HCT116 (cell line): ENCODE measurements at regions of chr18 and their contacts with region 1.

Region 1: GRCh38 chr18:4384932-4385331 is 70.2 kb downstream of the DLGAP1 start:
- DNase-seq: no peak
- ATAC-seq: no peak
- H3K4me3 ChIP-seq: no peak overlapping the region
- H3K27ac ChIP-seq: no peak overlapping the region
- H3K4me1 ChIP-seq: no peaks in the 10 kb centered on the region
- H3K27me3 ChIP-seq: no peaks in the 10 kb centered on the region
- CTCF ChIP-seq: no peak
- POLR2A ChIP-seq: no peak
- RAD21 ChIP-seq: no peak

Region 2: DNA sequence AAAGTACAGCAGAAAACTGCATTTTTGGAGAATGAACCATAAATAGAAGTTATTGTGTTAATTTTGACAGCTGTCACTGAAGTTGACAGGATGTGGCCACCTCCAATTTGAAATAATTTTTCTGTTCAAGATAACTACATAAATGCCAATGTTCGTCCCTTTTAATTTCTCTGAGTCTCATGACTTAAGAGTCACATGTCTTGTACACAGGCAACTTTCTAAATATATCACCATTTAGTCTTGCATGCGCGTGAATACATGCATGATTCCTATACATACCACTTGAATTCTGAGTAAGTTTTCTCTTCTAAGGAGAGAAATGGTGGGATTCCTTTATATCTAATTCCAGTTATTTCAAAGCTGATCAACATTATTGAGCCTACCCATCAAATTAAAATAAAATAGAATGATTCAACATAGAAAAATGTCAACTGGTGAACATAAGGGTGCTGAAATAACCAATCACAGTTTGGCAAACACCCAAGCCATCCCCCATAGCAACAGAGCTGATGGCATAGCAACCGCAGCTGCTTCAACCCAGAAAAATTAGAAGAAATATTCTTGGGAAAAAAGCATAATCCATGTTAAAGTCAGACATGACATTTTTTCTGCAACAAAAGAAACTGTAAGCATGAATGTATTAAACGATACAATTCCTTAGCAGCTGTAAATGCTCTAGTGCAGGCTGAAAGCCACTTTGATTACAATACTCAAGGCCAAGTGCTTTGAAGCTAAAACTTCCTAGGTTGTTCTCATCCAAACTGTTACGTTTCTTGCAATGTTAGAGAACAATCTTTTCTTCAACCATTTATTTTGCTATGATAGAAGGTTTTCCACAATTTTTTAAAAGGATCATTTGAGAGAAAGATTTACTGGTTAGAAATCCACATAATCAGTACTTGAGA is 212.5 kb before region 1 on chr18:
- CTCF ChIA-PET with region 1: no interaction called
- POLR2A ChIA-PET with region 1: no interaction called
- RAD21 ChIA-PET with region 1: no interaction called
- intact Hi-C with region 1: no loop called
- DNase-seq: no peak
- ATAC-seq: no peak
- H3K4me3 ChIP-seq: no peak overlapping the region
- H3K27ac ChIP-seq: no peak overlapping the region
- H3K4me1 ChIP-seq: no peaks in the 10 kb centered on the region
- H3K27me3 ChIP-seq: no peaks in the 10 kb centered on the region
- CTCF ChIP-seq: no peak
- POLR2A ChIP-seq: no peak
- RAD21 ChIP-seq: no peak

Region 3: DNA sequence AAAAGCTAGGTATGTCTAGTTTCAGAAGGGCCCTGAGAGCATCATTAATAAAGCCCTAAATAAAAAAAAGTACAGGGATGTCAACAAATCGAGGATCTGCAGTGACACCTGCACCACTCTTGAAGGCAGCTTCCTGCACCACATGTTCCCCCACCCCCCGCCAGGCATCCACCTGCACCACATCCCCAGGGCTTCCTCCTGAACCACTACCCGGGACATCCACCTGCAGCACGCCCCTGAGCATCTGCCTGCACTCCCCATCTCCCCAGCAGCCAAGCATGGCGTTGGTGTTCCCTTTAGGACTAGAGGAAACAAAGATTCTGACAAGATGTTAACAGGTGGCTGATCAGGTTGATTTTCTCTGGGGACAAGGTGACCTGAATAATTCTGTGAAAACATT is 15.0 kb after region 1 on chr18:
- CTCF ChIA-PET with region 1: no interaction called
- POLR2A ChIA-PET with region 1: no interaction called
- RAD21 ChIA-PET with region 1: no interaction called
- intact Hi-C with region 1: loop called (anchors 1 kb)
- DNase-seq: no peak
- ATAC-seq: no peak
- H3K4me3 ChIP-seq: no peak overlapping the region
- H3K27ac ChIP-seq: no peak overlapping the region
- H3K4me1 ChIP-seq: no peaks in the 10 kb centered on the region
- H3K27me3 ChIP-seq: no peaks in the 10 kb centered on the region
- CTCF ChIP-seq: no peak
- POLR2A ChIP-seq: no peak
- RAD21 ChIP-seq: no peak